GM18951 (cell line): ENCODE measurements at regions of chr17 and their contacts with region 1.

Region 1: GRCh38 chr17:82358465-82359350 is at the start of gene TEX19:
- POLR2A ChIP-seq: peak; percentile 27

Region 2: DNA sequence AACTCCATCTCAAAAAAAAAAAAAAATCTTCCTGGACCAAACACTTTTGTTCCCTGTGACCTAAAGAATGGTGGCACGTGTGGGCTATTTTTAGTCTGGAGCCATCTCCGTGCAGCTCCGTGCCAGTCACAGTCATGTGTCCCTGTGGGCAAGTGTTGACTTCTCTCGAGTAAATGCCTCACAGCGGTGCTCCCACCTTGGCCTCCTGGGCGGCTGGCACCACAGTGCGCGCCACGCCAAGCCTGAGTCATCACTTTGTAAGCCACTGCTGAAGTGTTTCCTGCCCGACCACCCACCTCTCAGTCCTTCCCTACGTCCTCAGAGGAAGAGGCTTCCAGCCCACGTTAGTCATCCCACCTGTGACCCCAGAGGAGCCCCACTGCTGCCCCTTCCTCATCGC is 48.5 kb after region 1 on chr17:
- in situ Hi-C with region 1: loop called (anchors 5 kb)
- POLR2A ChIP-seq: no peak